IMR-90 (cell line): ENCODE measurements at regions of chr9 and their contacts with region 1.

Region 1: GRCh38 chr9:76962732-76963131 is 56.7 kb upstream of the FOXB2 start:
- DNase-seq: no peak
- ATAC-seq: no peak
- H3K4me3 ChIP-seq: no peak overlapping the region
- H3K27ac ChIP-seq: no peak overlapping the region
- H3K4me1 ChIP-seq: no peaks in the 10 kb centered on the region
- H3K27me3 ChIP-seq: peaks cover 3% of the 10 kb centered on the region
- CTCF ChIP-seq: no peak
- POLR2A ChIP-seq: no peak
- RAD21 ChIP-seq: no peak

Region 2: GRCh38 chr9:76944011-76944410 is 18.7 kb before region 1 on chr9:
- CTCF ChIA-PET with region 1: no interaction called
- POLR2A ChIA-PET with region 1: no interaction called
- dilution Hi-C with region 1: no loop called
- in situ Hi-C with region 1: no loop called
- intact Hi-C with region 1: loop called (anchors 2 kb)
- DNase-seq: no peak
- ATAC-seq: no peak
- H3K4me3 ChIP-seq: no peak overlapping the region
- H3K27ac ChIP-seq: no peak overlapping the region
- H3K4me1 ChIP-seq: no peaks in the 10 kb centered on the region
- H3K27me3 ChIP-seq: peaks cover 8% of the 10 kb centered on the region
- CTCF ChIP-seq: no peak
- POLR2A ChIP-seq: no peak
- RAD21 ChIP-seq: no peak